ENCODE measurements at regions of chr3 and their contacts with region 1.

Region 1: DNA sequence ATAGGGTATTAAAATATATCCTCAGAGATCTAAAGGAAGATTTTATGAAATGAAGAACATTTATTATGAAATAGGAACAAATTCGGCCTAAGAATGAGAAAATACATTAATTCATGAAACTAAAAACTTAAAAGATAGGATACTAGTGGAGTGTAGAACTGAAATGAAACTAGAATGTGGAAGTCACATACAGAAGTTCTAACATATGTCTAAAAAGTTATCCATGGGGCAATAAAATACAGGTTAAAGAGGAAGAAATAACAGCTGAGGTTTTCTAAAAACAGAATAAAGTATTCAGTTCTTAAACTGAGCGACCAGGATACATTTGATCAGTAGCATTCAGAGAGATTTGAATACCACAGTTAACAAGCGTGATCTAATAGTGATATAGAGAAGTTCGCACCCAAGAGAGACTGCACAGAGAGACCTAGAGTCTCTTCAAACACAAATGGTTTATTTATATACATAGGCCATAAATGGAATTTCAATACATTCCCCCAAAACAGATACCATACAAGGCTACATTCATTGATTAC is 85.9 kb downstream of the FEZF2 start:
- DNase-seq: no peak
- ATAC-seq: no peak
- H3K4me3 ChIP-seq: no peak overlapping the region
- H3K27ac ChIP-seq: no peak overlapping the region
- H3K4me1 ChIP-seq: no peaks in the 10 kb centered on the region
- H3K27me3 ChIP-seq: no peaks in the 10 kb centered on the region
- CTCF ChIP-seq: no peak

Region 2: GRCh38 chr3:62214850-62215249 is 72.6 kb before region 1 on chr3:
- CTCF ChIA-PET with region 1: no interaction called
- POLR2A ChIA-PET with region 1: no interaction called
- intact Hi-C with region 1: no loop called
- DNase-seq: no peak
- ATAC-seq: no peak
- H3K4me3 ChIP-seq: no peak overlapping the region
- H3K27ac ChIP-seq: no peak overlapping the region
- H3K4me1 ChIP-seq: no peaks in the 10 kb centered on the region
- H3K27me3 ChIP-seq: peaks cover 8% of the 10 kb centered on the region; the same call in 1 of the 2 replicates
- CTCF ChIP-seq: no peak

Region 3: DNA sequence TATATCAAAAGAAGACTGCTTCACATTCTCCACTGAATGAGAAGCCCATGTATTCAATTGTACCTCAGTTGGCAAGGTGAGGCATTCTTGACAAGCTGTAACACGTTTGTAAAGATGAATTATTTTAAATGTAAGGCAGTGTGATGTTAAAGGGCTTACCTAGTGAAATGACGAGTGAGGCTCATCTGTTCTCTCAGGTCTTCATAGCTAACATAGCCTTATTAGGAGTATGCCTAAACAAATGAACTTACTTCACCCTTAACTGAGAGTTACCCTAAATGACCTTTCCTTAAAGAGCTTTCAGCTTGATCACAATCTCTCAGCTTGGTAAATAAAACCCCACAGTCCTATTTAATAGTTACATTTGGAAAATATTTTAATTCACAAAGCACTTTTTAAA is 41.3 kb before region 1 on chr3:
- CTCF ChIA-PET with region 1: no interaction called
- POLR2A ChIA-PET with region 1: no interaction called
- intact Hi-C with region 1: loop called (anchors 5 kb)
- DNase-seq: no peak
- ATAC-seq: no peak
- H3K4me3 ChIP-seq: no peak overlapping the region
- H3K27ac ChIP-seq: no peak overlapping the region
- H3K4me1 ChIP-seq: no peaks in the 10 kb centered on the region
- H3K27me3 ChIP-seq: no peaks in the 10 kb centered on the region
- CTCF ChIP-seq: no peak

Region 4: GRCh38 chr3:62434513-62434912 is 147.1 kb after region 1 on chr3:
- CTCF ChIA-PET with region 1: interaction called, 10 read pairs
- POLR2A ChIA-PET with region 1: no interaction called
- intact Hi-C with region 1: no loop called
- DNase-seq: no peak
- ATAC-seq: no peak
- H3K4me3 ChIP-seq: no peak overlapping the region
- H3K27ac ChIP-seq: no peak overlapping the region
- H3K4me1 ChIP-seq: no peaks in the 10 kb centered on the region
- H3K27me3 ChIP-seq: peaks cover 34% of the 10 kb centered on the region
- CTCF ChIP-seq: no peak

Region 5: GRCh38 chr3:62622553-62623193 is 335.2 kb after region 1 on chr3:
- CTCF ChIA-PET with region 1: no interaction called
- POLR2A ChIA-PET with region 1: no interaction called
- intact Hi-C with region 1: no loop called
- DNase-seq: peak; percentile 65
- ATAC-seq: peak; percentile 58
- H3K4me3 ChIP-seq: no peak overlapping the region
- H3K27ac ChIP-seq: no peak overlapping the region
- H3K4me1 ChIP-seq: no peaks in the 10 kb centered on the region
- H3K27me3 ChIP-seq: peaks cover 5% of the 10 kb centered on the region; the same call in 1 of the 2 replicates
- CTCF ChIP-seq: peak; percentile 75

Measured in PC-3 (cell line).